PC-9 (cell line): ENCODE measurements at regions of chr20 and their contacts with region 1.

Region 1: GRCh38 chr20:25178563-25179438 is 16.7 kb upstream of the ENTPD6 start:
- DNase-seq: peak; percentile 89 to 99
- H3K4me3 ChIP-seq: no peak overlapping the region
- H3K27ac ChIP-seq: peak overlapping the region; percentile 73
- H3K4me1 ChIP-seq: peaks cover 52% of the 10 kb centered on the region
- H3K27me3 ChIP-seq: no peaks in the 10 kb centered on the region
- CTCF ChIP-seq: peak; percentile 90

Region 2: DNA sequence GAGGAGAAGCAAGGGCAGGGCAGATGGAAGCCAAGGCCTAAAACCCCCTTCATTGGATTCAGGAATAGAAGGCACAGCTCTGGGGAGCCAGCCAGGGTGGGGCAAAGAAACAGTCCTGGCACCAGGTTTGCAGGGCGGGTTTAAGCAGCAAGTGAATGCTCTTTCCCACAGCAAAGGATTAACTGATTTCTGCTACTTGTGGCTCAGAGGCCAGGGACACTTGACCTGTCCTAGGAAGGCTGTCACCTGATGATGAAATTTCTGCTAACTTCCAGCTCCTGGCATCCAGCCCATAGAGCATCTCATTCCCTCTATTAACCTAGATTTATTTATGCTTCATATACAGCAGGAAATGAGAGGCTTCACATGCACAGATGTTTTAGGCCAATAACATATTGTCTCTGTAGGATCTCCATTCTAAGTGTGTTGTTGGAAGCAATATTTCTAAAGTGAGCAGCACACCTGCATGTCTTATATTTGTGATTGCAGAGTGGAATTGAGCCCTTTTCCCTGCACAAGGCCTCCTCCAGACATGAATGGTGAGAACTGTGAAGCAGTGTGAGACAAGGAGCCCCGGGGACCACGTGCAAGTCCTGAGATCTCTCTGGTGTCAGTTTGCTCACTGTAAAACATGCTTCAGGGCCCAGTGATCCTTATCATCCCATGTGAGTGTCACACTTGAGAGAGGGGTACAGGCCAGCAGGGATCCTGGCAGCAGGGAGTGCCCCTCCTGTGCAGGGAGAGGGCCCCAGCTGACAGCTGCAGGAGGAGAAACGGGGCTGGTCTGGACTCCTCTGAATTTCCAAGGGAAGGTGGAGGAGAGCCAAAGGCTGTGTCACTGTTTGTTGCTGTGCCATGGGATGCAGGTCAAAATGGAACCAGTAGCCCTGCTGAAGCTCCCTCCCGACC is 1258.1 kb before region 1 on chr20:
- CTCF ChIA-PET with region 1: interaction called, 7 read pairs
- POLR2A ChIA-PET with region 1: no interaction called
- intact Hi-C with region 1: loop called (anchors 10 kb)
- DNase-seq: no peak
- H3K4me3 ChIP-seq: no peak overlapping the region
- H3K27ac ChIP-seq: peak overlapping the region; percentile 47
- H3K4me1 ChIP-seq: peaks cover 31% of the 10 kb centered on the region
- H3K27me3 ChIP-seq: no peaks in the 10 kb centered on the region
- CTCF ChIP-seq: no peak

Region 3: DNA sequence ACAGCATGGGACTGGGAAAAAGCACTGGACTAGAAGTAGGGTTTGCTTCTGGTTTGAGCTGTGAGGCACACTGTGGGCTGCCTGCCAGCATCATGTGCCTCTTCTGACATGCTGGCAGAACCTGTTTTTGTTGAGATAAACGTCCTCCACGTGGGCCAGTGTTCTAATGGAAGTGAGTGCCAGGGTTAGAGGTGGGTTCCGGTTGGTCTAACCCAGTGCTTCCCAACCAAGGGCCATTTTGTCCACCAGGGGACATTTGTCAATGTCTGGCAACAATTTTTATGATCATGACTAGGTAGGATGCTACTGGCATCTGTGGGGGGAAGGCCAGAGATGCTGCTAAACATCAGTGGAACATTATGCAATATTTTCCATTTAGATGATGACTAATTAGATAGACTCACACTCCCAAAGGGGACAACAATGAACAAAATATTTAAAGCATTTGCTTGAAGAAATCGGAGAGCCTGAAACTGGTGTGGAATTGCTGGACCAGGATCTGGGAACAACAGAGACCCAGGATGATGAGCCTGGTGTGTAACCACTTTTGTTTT is 178.5 kb before region 1 on chr20:
- CTCF ChIA-PET with region 1: interaction called, 6 read pairs
- POLR2A ChIA-PET with region 1: no interaction called
- intact Hi-C with region 1: loop called (anchors 1 kb)
- DNase-seq: peak; percentile 90 to 98
- H3K4me3 ChIP-seq: no peak overlapping the region; the same call in 1 of the 2 replicates
- H3K27ac ChIP-seq: peak overlapping the region; percentile 68
- H3K4me1 ChIP-seq: peaks cover 33% of the 10 kb centered on the region
- H3K27me3 ChIP-seq: no peaks in the 10 kb centered on the region
- CTCF ChIP-seq: peak; percentile 50

Region 4: DNA sequence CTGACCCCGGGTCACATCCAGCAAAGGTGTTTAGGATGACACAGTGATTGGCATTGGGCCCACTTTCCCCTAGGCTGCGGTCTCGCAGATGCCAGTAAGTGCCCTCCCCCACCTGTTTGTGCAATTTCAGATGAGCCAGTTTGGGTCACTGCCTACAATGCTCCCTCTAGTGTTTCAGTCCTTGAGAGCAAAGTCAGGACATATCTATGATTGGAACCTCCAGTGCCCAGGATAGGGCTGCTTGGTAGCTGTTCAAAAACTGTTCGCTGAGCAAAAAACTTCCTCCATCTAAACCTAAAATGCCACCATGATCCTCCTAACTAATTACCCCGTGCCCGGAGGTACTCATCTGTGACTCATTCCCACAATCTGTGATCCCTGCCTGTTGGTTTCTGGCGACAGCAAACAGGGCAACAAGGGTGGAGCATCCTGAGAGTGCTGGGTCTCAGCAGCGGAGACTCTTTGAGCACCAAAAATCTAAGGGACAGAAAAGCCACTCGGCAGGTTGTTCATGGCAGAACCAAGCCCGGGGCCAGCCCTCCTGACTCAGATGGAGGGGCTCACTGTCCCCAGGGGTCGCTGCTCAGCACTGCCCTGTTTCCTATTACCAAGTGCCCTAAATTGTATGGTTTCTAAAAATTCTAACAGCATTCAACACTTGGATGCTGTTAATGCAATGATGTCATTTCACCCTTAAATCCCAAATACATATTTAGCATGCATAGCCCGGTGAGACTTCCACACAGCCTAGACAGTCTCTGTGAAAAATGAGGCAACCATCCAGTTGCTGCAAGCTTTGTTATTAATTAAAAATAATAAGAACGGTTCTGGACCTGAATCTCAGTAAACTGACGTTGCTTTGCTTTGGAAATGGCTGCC is 101.8 kb before region 1 on chr20:
- CTCF ChIA-PET with region 1: no interaction called
- POLR2A ChIA-PET with region 1: interaction called, 4 read pairs
- intact Hi-C with region 1: loop called (anchors 1 kb)
- DNase-seq: peak; percentile 93 to 95
- H3K4me3 ChIP-seq: peak overlapping the region; percentile 54; the same call in 1 of the 2 replicates
- H3K27ac ChIP-seq: peak overlapping the region; percentile 77
- H3K4me1 ChIP-seq: peaks cover 70% of the 10 kb centered on the region
- H3K27me3 ChIP-seq: no peaks in the 10 kb centered on the region
- CTCF ChIP-seq: peak; percentile 44; the same call in 1 of the 2 replicates

Region 5: GRCh38 chr20:25129908-25130307 is 48.9 kb before region 1 on chr20:
- CTCF ChIA-PET with region 1: no interaction called
- POLR2A ChIA-PET with region 1: no interaction called
- intact Hi-C with region 1: no loop called
- DNase-seq: no peak
- H3K4me3 ChIP-seq: no peak overlapping the region
- H3K27ac ChIP-seq: no peak overlapping the region
- H3K4me1 ChIP-seq: no peaks in the 10 kb centered on the region
- H3K27me3 ChIP-seq: no peaks in the 10 kb centered on the region
- CTCF ChIP-seq: no peak

Region 6: GRCh38 chr20:25145131-25145530 is 33.7 kb before region 1 on chr20:
- CTCF ChIA-PET with region 1: no interaction called
- POLR2A ChIA-PET with region 1: no interaction called
- intact Hi-C with region 1: no loop called
- DNase-seq: no peak
- H3K4me3 ChIP-seq: no peak overlapping the region
- H3K27ac ChIP-seq: no peak overlapping the region
- H3K4me1 ChIP-seq: no peaks in the 10 kb centered on the region
- H3K27me3 ChIP-seq: no peaks in the 10 kb centered on the region
- CTCF ChIP-seq: no peak

Region 7: DNA sequence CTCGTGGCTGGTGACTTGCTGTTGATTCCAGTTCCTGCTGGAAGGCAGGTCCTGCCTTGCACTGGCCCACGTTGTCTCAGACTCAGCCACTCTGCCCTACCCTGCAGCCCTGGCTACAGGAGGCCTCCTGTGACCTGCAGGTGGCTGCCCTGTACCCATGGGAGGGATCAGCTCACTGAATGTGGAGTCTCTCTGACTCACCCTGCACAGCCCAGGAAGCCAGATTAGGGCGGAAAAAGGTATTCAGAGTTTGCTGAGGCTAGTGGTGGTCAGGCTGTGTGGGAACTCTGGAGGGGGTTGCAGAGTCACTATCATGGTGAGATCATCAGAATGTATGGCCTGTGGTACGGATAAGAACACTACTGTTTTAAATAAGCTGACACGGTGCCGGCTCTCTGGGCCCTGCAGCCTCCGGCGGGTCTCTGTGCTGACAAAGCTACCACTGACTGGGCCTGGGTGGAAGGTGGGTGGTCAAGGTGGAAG is 44.4 kb after region 1 on chr20:
- CTCF ChIA-PET with region 1: interaction called, 10 read pairs
- POLR2A ChIA-PET with region 1: no interaction called
- intact Hi-C with region 1: no loop called
- DNase-seq: peak; percentile 92 to 98
- H3K4me3 ChIP-seq: peak overlapping the region; percentile 20; the same call in 1 of the 2 replicates
- H3K27ac ChIP-seq: peak overlapping the region; percentile 97
- H3K4me1 ChIP-seq: peaks cover 52% of the 10 kb centered on the region
- H3K27me3 ChIP-seq: no peaks in the 10 kb centered on the region
- CTCF ChIP-seq: peak; percentile 45; the same call in 1 of the 2 replicates

Region 8: DNA sequence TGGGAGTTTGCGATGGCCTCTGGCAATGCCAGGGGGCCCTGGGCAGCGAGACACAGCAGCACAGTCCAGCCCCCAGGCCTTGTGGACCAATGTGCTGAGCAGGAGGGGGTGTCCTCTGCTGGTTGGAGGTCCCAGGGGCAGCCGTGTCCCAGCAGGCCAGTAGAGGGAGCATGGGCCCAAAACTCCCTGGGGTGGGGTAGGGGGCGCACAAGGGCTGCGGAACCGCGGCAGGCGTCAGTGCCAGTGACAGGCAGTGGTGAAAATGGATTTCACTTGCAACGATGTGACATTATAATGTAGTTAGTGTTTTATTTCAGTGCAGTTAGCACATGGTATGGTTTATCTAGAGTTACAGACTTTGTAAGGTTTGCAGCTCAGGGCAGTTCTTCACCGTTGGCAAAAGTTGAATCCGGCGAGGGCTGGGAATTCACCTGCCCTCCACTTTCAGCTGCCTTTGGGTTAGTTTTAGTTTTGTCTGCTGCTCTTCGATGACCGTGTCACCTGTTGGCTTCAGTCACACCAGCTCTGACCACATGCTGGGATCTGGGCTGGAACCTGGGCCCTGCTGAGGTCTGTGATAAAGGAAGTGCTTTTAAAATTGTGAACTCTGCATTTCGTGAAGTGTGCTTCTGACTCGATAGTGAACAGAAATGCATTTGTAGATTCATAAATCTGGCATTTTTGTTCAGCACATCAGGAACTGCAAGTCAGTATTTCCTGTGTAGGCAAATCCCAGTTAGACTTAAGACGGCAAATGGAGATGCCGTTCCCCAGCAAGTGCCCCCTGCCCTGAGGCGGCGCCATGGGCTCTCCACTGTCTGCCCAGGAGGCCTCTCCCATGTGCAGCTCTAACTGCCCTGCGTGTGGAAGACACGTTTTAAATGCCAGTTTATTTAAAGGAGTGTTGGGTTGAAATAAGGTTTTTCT is 115.9 kb after region 1 on chr20:
- CTCF ChIA-PET with region 1: no interaction called
- POLR2A ChIA-PET with region 1: no interaction called
- intact Hi-C with region 1: loop called (anchors 10 kb)
- DNase-seq: peak in 1 of 2 experiments; percentile 51
- H3K4me3 ChIP-seq: no peak overlapping the region
- H3K27ac ChIP-seq: no peak overlapping the region
- H3K4me1 ChIP-seq: no peaks in the 10 kb centered on the region
- H3K27me3 ChIP-seq: no peaks in the 10 kb centered on the region
- CTCF ChIP-seq: peak; percentile 64